Gastrocnemius medialis (tissue), 4 donors: ENCODE measurements at regions of chr1 and their contacts with region 1.

Region 1: GRCh38 chr1:206635080-206635977 is at the start of gene DYRK3:
- DNase-seq: peak; percentile 84 to 88
- ATAC-seq: peak; percentile 81 to 83
- H3K4me3 ChIP-seq: peak within 1 kb of the TSS; percentile 76 to 93 (median 88)
- H3K27ac ChIP-seq: peak within 1 kb of the TSS; percentile 70 to 79 (median 73)
- H3K4me1 ChIP-seq: peaks cover 11 to 16% of the 10 kb centered on the region in 2 donors
- H3K27me3 ChIP-seq: no peaks in the 10 kb centered on the region
- CTCF ChIP-seq: peak in 3 of 5 experiments; percentile 26 to 46 (median 29)
- POLR2A ChIP-seq: peak; percentile 89 to 95
- total RNA-seq, gene DYRK3: 0.85 to 1.8 (median 1.0) TPM

Region 2: GRCh38 chr1:206663832-206664652 is 28.7 kb after region 1 on chr1:
- in situ Hi-C with region 1: no loop called
- intact Hi-C with region 1: loop called (anchors 1 kb)
- DNase-seq: peak; percentile 62 to 81
- ATAC-seq: peak; percentile 70 to 75
- H3K4me3 ChIP-seq: peak overlapping the region; percentile 35 to 46 (median 42)
- H3K27ac ChIP-seq: peak overlapping the region; percentile 83 to 91 (median 89)
- H3K4me1 ChIP-seq: peaks cover 34 to 51% of the 10 kb centered on the region in 2 donors
- H3K27me3 ChIP-seq: no peaks in the 10 kb centered on the region
- CTCF ChIP-seq: peak; percentile 90 to 97 (median 94)
- POLR2A ChIP-seq: peak in 1 of 2 donors; percentile 29

Region 3: GRCh38 chr1:206725109-206725963 is 90.0 kb after region 1 on chr1:
- in situ Hi-C with region 1: no loop called
- intact Hi-C with region 1: loop called (anchors 2 kb)
- DNase-seq: no peak
- ATAC-seq: no peak
- H3K4me3 ChIP-seq: no peak overlapping the region
- H3K27ac ChIP-seq: peak overlapping the region; percentile 81 to 95 (median 92)
- H3K4me1 ChIP-seq: peaks cover 69 to 75% of the 10 kb centered on the region in 2 donors
- H3K27me3 ChIP-seq: no peaks in the 10 kb centered on the region
- CTCF ChIP-seq: peak in 3 of 5 experiments; percentile 21 to 42 (median 42)
- POLR2A ChIP-seq: no peak

Region 4: GRCh38 chr1:206982216-206982615 is 346.9 kb after region 1 on chr1:
- in situ Hi-C with region 1: no loop called
- intact Hi-C with region 1: loop called (anchors 5 kb)
- DNase-seq: peak; percentile 11 to 19
- ATAC-seq: peak; percentile 46 to 52
- H3K4me3 ChIP-seq: no peak overlapping the region
- H3K27ac ChIP-seq: no peak overlapping the region
- H3K4me1 ChIP-seq: no peaks in the 10 kb centered on the region
- H3K27me3 ChIP-seq: no peaks in the 10 kb centered on the region
- CTCF ChIP-seq: peak in 3 of 5 experiments; percentile 42 to 52 (median 44)
- POLR2A ChIP-seq: no peak